HCT116 (cell line): ENCODE measurements at regions of chr3 and their contacts with region 1.

Region 1: GRCh38 chr3:10758304-10759061 is 57.5 kb upstream of the SLC6A11 start:
- DNase-seq: peak; percentile 51
- ATAC-seq: peak; percentile 97
- H3K4me3 ChIP-seq: no peak overlapping the region
- H3K27ac ChIP-seq: no peak overlapping the region
- H3K4me1 ChIP-seq: no peaks in the 10 kb centered on the region
- H3K27me3 ChIP-seq: peaks cover 37% of the 10 kb centered on the region
- CTCF ChIP-seq: peak; percentile 48 to 94 (median 64); a peak in 5 of 6 replicates
- POLR2A ChIP-seq: no peak
- RAD21 ChIP-seq: peak; percentile 93

Region 2: GRCh38 chr3:10557781-10558373 is 200.6 kb before region 1 on chr3:
- CTCF ChIA-PET with region 1: no interaction called
- POLR2A ChIA-PET with region 1: no interaction called
- RAD21 ChIA-PET with region 1: no interaction called
- intact Hi-C with region 1: no loop called
- DNase-seq: no peak
- ATAC-seq: peak; percentile 88
- H3K4me3 ChIP-seq: no peak overlapping the region
- H3K27ac ChIP-seq: no peak overlapping the region
- H3K4me1 ChIP-seq: peaks cover 5 to 18% of the 10 kb centered on the region in 2 experiments; a peak in 3 of 4 replicates
- H3K27me3 ChIP-seq: peaks cover 18% of the 10 kb centered on the region; the same call in 1 of the 2 replicates
- CTCF ChIP-seq: no peak
- POLR2A ChIP-seq: no peak
- RAD21 ChIP-seq: no peak

Region 3: DNA sequence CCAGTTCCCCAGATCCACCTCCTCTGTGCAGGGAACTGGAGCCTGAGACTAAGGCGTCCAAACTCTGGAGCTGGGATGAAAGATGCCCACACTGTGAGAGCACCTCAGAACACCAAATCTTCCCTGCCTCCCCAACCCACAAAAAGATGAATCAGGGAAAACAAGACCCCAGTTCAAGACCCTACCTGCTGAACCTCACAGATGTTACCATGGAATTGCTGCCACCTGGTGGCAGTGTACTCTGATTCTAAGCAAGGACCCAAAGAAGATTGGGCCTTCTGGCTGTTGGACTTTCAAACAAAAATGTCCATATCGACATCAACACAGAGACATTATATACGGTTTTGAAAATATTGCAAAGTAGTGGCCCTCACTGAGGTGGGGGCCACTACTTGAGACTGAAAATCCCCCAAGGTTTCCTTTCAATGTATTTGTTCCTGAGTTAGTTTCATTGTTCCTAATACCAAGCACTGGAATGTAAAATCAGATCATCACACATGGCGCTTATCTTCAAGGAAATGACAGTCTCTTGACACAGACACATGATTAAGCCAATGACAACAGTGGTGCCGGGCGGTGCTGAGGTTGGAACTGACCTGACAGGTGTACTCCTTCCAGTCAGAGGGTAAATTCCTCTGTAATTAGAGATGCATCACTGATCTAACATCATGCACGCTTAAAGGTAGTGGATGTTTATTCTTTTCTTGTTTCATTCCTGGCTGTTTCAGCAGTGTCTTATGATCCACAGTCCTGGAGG is 125.2 kb after region 1 on chr3:
- CTCF ChIA-PET with region 1: interaction called, 9 read pairs
- POLR2A ChIA-PET with region 1: no interaction called
- RAD21 ChIA-PET with region 1: interaction called, 3 to 4 read pairs
- intact Hi-C with region 1: loop called (anchors 1 kb)
- DNase-seq: peak; percentile 8
- ATAC-seq: peak; percentile 76
- H3K4me3 ChIP-seq: no peak overlapping the region
- H3K27ac ChIP-seq: no peak overlapping the region
- H3K4me1 ChIP-seq: no peaks in the 10 kb centered on the region
- H3K27me3 ChIP-seq: peaks cover 56% of the 10 kb centered on the region
- CTCF ChIP-seq: peak; percentile 76 to 87 (median 77); a peak in 5 of 6 replicates
- POLR2A ChIP-seq: no peak
- RAD21 ChIP-seq: peak; percentile 71